Activated CD4-positive, alpha-beta memory T cell treated with anti-CD3 and anti-CD28 coated beads, Interleukin-2, amount 10 ng/mL, durations not matched to agents 7 days and 5 days (primary cell): ENCODE measurements at regions of chr16 and their contacts with region 1.

Region 1: GRCh38 chr16:67159593-67160406 is at the starts of genes FBXL8 and TRADD:
- DNase-seq: peak; percentile 86
- H3K4me3 Mint-ChIP-seq: peak within 1 kb of the TSS; percentile 96
- H3K27ac Mint-ChIP-seq: peak within 1 kb of the TSS; percentile 98
- H3K4me1 Mint-ChIP-seq: peaks cover 65% of the 10 kb centered on the region
- H3K27me3 Mint-ChIP-seq: peaks cover 8% of the 10 kb centered on the region
- total RNA-seq, gene FBXL8: 52.3 to 54.4 TPM
- total RNA-seq, gene TRADD: 96.9 to 97.3 TPM

Region 2: DNA sequence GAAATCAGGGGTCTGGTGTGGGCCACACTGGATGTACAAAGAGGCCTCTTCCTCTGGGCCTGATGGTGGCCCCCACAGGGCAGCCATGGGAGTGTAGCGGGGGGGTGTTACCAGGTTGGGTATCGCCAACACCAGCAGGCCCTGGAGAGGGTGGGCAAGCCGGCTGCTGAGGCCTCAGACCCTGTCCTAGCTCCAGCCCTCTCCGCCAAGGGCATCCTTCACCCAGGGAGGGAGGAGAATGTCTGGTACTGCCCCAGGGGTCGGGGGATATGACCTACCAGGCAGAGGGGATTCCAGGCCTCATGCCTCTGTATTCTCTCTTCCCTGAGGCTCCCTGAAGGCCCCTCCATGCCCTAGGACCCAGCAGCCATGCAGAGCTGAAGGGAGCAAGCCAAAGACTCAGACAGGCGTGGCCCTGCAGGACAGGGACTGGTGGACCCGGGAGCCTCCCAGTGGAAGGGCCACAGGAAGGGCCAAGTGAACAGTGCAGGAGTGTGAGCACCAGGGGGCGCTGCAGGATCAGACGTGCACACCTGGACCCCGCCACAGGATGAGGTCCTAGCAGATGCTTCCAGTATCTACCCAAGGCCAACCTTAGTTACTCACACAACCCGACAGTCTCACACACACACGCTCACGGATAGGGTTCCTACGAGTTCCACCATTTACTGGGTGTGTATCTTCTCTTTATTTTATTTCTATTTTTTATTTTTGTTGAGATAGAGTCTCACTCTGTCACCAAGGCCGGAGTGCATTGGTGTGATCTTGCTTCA is 182.3 kb before region 1 on chr16:
- CTCF ChIA-PET with region 1: interaction called, 35 read pairs
- POLR2A ChIA-PET with region 1: interaction called, 59 read pairs
- DNase-seq: peak; percentile 92
- H3K4me3 Mint-ChIP-seq: no peak overlapping the region
- H3K27ac Mint-ChIP-seq: peak overlapping the region; percentile 64
- H3K4me1 Mint-ChIP-seq: peaks cover 58% of the 10 kb centered on the region
- H3K27me3 Mint-ChIP-seq: no peaks in the 10 kb centered on the region

Region 3: DNA sequence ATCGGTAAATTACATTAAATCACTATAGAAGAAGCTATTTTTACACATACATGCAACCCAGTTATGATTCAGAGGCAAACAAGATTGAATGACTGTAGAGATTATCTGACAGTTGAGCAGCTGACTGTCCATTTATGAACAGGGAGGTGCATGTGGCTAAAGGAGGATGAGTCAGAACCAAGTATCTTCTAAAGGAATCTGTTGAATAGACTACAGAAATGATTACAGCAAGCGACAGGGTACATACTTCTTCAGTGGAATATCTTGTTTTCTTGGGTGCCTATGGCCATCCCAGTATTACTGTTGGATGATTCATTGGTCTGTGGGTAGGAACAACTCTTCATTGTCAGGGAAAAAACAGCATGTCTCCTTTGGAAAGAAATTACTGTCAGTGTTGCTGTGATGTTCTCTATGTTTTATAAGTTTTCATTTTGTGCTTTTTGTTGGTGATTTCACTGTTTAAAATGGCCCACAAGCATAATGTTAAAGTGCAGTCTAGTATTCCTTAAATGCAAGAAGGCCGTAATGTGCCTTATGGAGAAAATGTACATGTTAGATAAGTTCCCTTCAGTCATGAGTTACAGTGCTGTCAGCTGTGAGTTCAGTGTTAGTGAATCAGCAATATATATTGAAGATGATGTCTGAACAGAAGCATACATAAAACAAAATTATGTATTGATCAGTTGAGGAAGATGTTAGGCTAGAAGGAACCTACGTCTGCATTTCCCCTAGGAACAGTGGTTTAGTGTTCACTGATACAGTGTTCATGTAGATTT is 103.9 kb before region 1 on chr16:
- CTCF ChIA-PET with region 1: interaction called, 11 read pairs
- POLR2A ChIA-PET with region 1: interaction called, 6 read pairs
- DNase-seq: peak; percentile 30
- H3K4me3 Mint-ChIP-seq: peak overlapping the region; percentile 13
- H3K27ac Mint-ChIP-seq: peak overlapping the region; percentile 85
- H3K4me1 Mint-ChIP-seq: peaks cover 66% of the 10 kb centered on the region
- H3K27me3 Mint-ChIP-seq: no peaks in the 10 kb centered on the region

Region 4: GRCh38 chr16:67144943-67145342 is 14.9 kb before region 1 on chr16:
- CTCF ChIA-PET with region 1: interaction called, 19 read pairs
- POLR2A ChIA-PET with region 1: interaction called, 10 read pairs
- DNase-seq: no peak
- H3K4me3 Mint-ChIP-seq: no peak overlapping the region
- H3K27ac Mint-ChIP-seq: no peak overlapping the region
- H3K4me1 Mint-ChIP-seq: peaks cover 6% of the 10 kb centered on the region
- H3K27me3 Mint-ChIP-seq: no peaks in the 10 kb centered on the region

Region 5: DNA sequence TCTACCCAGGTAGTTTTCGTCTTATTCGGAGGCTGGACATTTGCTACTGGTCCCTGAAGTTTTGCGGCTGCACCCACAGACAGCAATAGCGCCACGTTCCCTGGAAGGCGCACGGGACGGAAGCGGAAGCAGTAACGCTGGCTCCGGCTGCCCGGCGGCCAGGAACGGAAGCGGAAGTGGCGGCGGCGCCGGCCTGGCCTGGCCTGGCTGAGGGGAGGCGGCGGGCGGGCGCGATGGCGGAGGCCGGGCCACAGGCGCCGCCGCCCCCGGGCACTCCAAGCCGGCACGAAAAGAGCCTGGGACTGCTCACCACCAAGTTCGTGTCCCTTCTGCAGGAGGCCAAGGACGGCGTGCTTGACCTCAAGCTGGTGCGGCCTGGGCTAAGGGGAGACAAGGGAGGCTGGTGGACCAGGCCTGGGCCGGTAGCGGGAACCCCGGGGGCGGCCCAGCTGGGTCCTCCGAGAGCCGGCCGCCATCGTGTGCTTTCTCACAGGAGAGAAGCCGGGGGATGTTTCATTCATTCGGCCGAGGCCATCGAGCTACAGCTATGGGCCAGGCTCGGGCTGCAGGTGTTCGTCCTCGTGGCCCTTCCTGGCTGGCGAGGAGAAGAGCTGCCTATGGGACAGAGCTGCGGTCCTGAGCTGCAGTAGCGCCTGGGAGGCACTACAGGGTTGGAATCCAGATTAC is 32.3 kb after region 1 on chr16 and contains the start of gene E2F4:
- CTCF ChIA-PET with region 1: interaction called, 6 read pairs
- POLR2A ChIA-PET with region 1: interaction called, 16 read pairs
- DNase-seq: peak; percentile 91
- H3K4me3 Mint-ChIP-seq: peak within 1 kb of the TSS; percentile 86
- H3K27ac Mint-ChIP-seq: peak within 1 kb of the TSS; percentile 83
- H3K4me1 Mint-ChIP-seq: peaks cover 50% of the 10 kb centered on the region
- H3K27me3 Mint-ChIP-seq: no peaks in the 10 kb centered on the region
- total RNA-seq, gene E2F4: 127 to 131 TPM

Region 6: GRCh38 chr16:67301080-67301782 is 141.4 kb after region 1 on chr16:
- CTCF ChIA-PET with region 1: no interaction called
- POLR2A ChIA-PET with region 1: no interaction called
- DNase-seq: no peak
- H3K4me3 Mint-ChIP-seq: no peak overlapping the region
- H3K27ac Mint-ChIP-seq: no peak overlapping the region
- H3K4me1 Mint-ChIP-seq: no peaks in the 10 kb centered on the region
- H3K27me3 Mint-ChIP-seq: peaks cover 6% of the 10 kb centered on the region